ENCODE measurements at regions of chr10 and their contacts with region 1.

Region 1: GRCh38 chr10:100697070-100697469 is 48.3 kb upstream of the PAX2 start:
- DNase-seq: peak; percentile 24
- ATAC-seq: peak; percentile 79
- H3K4me3 ChIP-seq: no peak overlapping the region
- H3K27ac ChIP-seq: no peak overlapping the region
- H3K4me1 ChIP-seq: 0 out of 2 replicates have a peak, but pooled peaks cover 3% of the 10 kb centered on the region
- H3K27me3 ChIP-seq: no peaks in the 10 kb centered on the region
- CTCF ChIP-seq: no peak

Region 2: GRCh38 chr10:100670828-100671479 is 26.1 kb before region 1 on chr10:
- CTCF ChIA-PET with region 1: interaction called, 11 read pairs
- POLR2A ChIA-PET with region 1: no interaction called
- in situ Hi-C with region 1: no loop called
- intact Hi-C with region 1: no loop called
- DNase-seq: no peak
- ATAC-seq: peak; percentile 92
- H3K4me3 ChIP-seq: peak overlapping the region; percentile 29 to 37
- H3K27ac ChIP-seq: no peak overlapping the region
- H3K4me1 ChIP-seq: peaks cover 3% of the 10 kb centered on the region; the same call in 1 of the 2 replicates
- H3K27me3 ChIP-seq: peaks cover 23% of the 10 kb centered on the region
- CTCF ChIP-seq: peak; percentile 100